ENCODE measurements at regions of chr3 and their contacts with region 1.

Region 1: DNA sequence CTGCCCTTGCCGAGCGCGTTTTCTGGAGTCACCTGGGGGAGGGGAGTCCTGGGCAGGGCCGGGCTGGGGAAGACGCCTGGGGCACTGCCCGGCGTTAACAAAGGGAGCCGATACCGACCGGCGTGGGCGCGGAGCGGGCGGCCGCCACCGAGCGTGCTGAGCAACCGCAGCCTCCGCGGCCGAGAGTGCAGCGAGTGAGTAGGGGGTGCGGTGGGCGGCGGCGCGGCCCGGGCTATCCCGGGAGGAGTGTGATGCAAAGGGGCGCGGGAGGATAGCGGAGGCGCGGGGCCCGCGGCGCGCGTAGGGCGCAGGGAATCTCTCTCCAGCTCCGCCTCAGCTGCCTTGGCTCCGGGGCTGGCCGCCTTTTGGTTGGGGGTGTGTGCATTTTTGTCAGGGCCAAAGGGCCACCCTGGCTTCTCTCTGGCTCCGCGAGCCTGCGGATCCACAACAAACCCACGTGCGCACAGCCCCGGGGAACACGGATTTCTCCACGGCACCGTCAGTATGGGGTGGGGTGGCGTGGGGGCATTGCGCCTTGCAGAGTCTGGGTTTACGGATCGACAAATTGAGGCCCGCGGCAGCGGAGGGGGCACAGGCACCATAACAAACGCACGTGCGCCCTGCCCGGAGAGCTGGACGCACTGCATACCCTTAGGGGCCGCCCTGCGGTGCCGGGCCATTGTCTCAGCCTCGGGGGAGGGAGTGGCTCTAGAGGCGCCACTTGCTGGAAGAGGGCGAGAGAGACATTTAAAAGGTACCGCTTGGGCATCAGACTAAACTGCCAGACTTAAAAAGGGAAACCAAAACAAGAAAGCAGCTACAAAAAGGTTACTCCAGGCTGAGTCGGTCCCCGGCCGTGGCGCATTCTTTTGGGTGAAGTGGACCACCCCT is 560 bp downstream of the ST6GAL1 start:
- DNase-seq: peak; percentile 54 to 75
- ATAC-seq: peak; percentile 72 to 73
- H3K4me3 ChIP-seq: peak overlapping the region; percentile 80 to 99 (median 93)
- H3K27ac ChIP-seq: peak overlapping the region; percentile 88 to 96 (median 93)
- H3K4me1 ChIP-seq: peaks cover 27 to 33% of the 10 kb centered on the region in 2 donors
- H3K27me3 ChIP-seq: no peaks in the 10 kb centered on the region
- CTCF ChIP-seq: peak in 3 of 5 experiments; percentile 14 to 36 (median 19)
- POLR2A ChIP-seq: peak in 1 of 2 donors; percentile 21

Region 2: DNA sequence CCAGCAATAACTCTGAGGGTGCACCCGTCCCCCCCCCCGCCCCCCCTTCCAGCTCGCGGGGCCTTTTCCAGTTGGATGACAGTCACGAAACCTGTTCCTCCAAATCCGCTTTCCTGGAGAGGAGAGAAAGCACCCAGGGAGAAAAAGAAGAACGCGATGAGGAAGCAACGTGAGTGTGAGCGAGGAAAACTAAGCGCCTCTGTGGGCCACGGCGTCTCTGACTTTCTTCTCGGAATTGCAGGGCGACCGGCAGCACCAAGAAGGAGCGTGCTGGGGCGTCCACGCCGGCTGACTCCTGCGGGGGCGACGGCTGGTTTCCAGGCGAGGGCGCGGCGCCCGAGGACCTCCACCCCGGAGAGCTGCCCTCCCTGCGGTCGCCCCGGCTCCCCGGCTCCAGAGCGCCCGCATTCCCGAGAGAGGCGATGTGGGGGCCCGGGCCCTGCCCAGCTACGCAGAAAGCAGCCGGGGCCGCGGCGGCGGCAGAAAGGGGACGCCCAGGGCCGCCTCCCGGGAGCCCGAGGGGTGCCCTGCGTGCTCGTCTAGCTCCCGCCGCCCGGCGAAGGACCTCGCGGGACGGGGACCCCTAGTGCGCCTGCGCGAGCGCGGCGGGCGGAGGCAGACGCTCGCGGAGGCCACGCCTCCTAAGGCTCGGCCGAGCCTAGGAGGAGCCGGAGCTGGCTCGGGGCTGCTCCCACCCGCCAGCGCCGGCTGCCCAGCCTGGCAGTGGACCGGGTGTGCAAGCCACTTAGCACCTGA is 103.7 kb before region 1 on chr3:
- in situ Hi-C with region 1: no loop called
- intact Hi-C with region 1: loop called (anchors 5 kb)
- DNase-seq: peak; percentile 45 to 67
- ATAC-seq: peak; percentile 87 to 94
- H3K4me3 ChIP-seq: peak overlapping the region; percentile 65 to 90 (median 86)
- H3K27ac ChIP-seq: peak overlapping the region in 3 of 4 donors; percentile 30 to 75 (median 49)
- H3K4me1 ChIP-seq: peaks cover 0 to 14% of the 10 kb centered on the region in 2 donors
- H3K27me3 ChIP-seq: peaks cover 45 to 64% (median 62%) of the 10 kb centered on the region in 3 donors
- CTCF ChIP-seq: no peak
- POLR2A ChIP-seq: peak; percentile 59 to 61

Region 3: GRCh38 chr3:186849374-186849975 is 81.4 kb before region 1 on chr3:
- in situ Hi-C with region 1: loop called in 1 of 4 experiments (anchors 5 kb)
- intact Hi-C with region 1: loop called (anchors 1 kb)
- DNase-seq: no peak
- ATAC-seq: peak; percentile 90 to 97
- H3K4me3 ChIP-seq: no peak overlapping the region
- H3K27ac ChIP-seq: no peak overlapping the region
- H3K4me1 ChIP-seq: no peaks in the 10 kb centered on the region
- H3K27me3 ChIP-seq: peaks cover 0 to 18% (median 11%) of the 10 kb centered on the region in 3 donors
- CTCF ChIP-seq: peak; percentile 33 to 62 (median 50)
- POLR2A ChIP-seq: no peak

Region 4: DNA sequence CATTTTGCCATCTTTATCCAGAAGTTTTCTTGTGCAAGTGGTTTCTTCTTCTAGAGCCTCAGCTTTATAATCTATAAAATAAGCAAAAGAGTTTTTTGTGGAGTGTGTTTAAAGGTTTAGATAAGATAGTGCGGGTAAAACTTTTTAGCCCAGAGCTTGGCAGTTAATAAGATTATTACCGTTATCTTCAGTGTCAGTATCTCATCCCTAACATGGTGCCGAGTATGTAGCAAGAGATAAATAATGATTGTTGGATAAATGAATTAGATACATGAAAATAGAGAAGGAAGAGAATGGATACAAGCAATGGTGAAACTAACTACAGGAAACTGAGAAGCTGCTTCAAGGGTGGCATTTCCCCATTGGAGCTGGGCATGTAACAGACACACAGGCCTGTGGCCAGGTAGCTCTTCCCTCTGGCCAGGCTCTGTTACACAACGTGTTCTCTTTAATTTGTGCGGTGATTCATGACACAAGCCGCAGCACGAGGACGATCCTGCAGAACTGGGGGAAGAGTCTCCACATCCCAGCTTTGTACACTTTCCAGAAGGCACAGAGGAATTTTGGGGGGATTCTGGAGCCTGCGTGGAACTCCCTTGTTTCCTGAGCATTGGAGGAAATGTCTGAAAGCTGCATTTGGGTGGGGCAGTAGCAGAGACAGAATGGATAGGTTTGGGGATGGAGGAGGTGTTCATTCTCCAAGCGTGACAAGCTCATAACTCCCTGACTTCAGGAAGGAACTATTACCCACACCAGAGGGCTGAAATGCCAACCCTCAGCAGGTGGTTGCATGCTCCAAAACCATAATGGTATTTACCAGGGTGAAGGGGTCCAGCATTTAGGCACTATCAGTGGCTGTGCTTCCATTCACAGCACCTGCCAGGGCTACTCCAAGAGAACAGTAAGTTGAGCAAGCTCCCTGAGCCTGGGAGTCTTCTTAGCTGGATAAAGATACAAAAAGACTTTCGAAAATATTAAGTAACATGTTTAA is 14.8 kb before region 1 on chr3:
- in situ Hi-C with region 1: no loop called
- intact Hi-C with region 1: loop called (anchors 2 kb)
- DNase-seq: peak; percentile 84 to 92
- ATAC-seq: peak; percentile 99
- H3K4me3 ChIP-seq: no peak overlapping the region
- H3K27ac ChIP-seq: peak overlapping the region; percentile 79 to 88 (median 84)
- H3K4me1 ChIP-seq: peaks cover 35 to 39% of the 10 kb centered on the region in 2 donors
- H3K27me3 ChIP-seq: no peaks in the 10 kb centered on the region
- CTCF ChIP-seq: no peak
- POLR2A ChIP-seq: peak in 1 of 2 donors; percentile 12

Region 5: DNA sequence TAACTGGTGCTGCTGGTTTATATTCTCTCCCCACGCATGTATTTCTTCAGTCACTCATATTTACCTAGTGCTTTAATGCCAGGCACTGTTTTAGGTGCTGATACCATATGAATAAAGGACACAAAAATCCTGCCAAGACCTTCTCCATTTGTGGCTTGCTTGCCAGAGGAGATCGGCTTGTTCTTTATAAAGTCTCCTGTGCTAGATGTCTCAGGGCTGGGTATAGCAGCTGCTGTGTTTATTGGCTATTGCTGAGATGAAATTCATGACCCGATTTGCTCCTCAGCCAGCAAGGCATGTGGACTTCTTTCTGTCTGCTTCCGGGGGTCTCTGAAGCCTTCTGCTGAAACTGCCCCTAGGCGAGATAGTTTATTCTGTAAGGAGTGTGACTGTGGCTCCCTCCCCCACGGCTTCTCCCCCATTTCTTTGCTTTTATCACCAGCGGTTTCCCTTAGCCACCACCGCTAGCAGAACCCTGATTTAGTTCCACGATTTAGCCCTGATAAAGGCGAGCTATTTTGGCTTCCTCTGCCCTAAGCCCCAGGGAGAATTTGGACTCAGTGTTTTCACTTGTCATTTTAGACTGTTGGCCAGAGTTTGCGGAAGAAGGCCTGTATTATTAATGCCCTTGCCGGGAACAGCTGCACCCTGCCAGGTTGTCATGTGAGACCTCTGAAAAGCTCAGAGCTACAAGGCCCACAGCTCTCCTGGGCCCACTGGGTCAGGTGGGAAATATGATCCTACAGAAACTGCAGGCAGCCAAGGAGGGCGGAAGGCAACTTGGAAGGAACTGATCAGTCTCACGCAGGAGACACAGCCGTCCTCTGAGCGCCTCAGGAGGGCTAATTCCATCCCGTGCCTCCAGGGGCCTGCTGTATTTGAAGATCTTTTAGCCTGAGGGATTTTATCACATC is 46.2 kb after region 1 on chr3:
- in situ Hi-C with region 1: no loop called
- intact Hi-C with region 1: loop called (anchors 2 kb)
- DNase-seq: peak; percentile 95 to 98
- ATAC-seq: peak; percentile 90 to 92
- H3K4me3 ChIP-seq: peak overlapping the region; percentile 28 to 41 (median 37)
- H3K27ac ChIP-seq: peak overlapping the region; percentile 91 to 97 (median 93)
- H3K4me1 ChIP-seq: peaks cover 53 to 57% of the 10 kb centered on the region in 2 donors
- H3K27me3 ChIP-seq: no peaks in the 10 kb centered on the region
- CTCF ChIP-seq: peak in 3 of 5 experiments; percentile 25 to 52 (median 45)
- POLR2A ChIP-seq: peak in 1 of 2 donors; percentile 14

Region 6: GRCh38 chr3:187130346-187131066 is 199.6 kb after region 1 on chr3:
- in situ Hi-C with region 1: no loop called
- intact Hi-C with region 1: no loop called
- DNase-seq: no peak
- ATAC-seq: peak; percentile 66 to 75
- H3K4me3 ChIP-seq: no peak overlapping the region
- H3K27ac ChIP-seq: peak overlapping the region in 2 of 4 donors; percentile 33 to 50
- H3K4me1 ChIP-seq: no peaks in the 10 kb centered on the region
- H3K27me3 ChIP-seq: no peaks in the 10 kb centered on the region
- CTCF ChIP-seq: no peak
- POLR2A ChIP-seq: no peak

Region 7: GRCh38 chr3:187164885-187165543 is 234.1 kb after region 1 on chr3:
- in situ Hi-C with region 1: no loop called
- intact Hi-C with region 1: loop called (anchors 5 kb)
- DNase-seq: peak in 1 of 2 donors; percentile 15
- ATAC-seq: peak; percentile 68 to 90
- H3K4me3 ChIP-seq: no peak overlapping the region
- H3K27ac ChIP-seq: no peak overlapping the region
- H3K4me1 ChIP-seq: peaks cover 11 to 24% of the 10 kb centered on the region in 2 donors
- H3K27me3 ChIP-seq: no peaks in the 10 kb centered on the region
- CTCF ChIP-seq: peak; percentile 55 to 83 (median 69)
- POLR2A ChIP-seq: no peak

Measured in gastrocnemius medialis (tissue), 4 donors.